ENCODE measurements at regions of chr9 and their contacts with region 1.

Region 1: DNA sequence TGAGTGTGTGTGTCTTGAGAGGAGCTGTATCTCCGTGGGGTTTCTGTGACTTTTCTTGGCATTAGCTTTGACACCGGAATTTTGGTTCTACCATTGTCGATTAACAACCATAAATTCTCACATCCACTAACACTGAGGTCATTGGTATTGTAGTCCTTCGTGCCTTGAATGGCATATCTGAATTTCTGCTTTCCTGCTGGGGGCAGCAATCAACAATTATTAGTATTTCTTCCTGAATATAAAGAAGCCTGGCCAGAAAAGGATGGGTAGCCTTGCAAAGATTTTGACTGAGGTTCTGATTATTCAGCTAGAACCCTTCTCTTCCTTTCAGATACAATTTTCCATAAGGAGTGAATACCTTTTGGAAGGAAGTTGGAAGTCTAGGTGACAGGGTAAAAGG is 33.5 kb upstream of the SHOC1 start:
- DNase-seq: peak; percentile 48
- ATAC-seq: peak; percentile 39
- H3K4me3 ChIP-seq: no peak overlapping the region
- H3K4me3 Mint-ChIP-seq: no peak overlapping the region
- H3K27ac ChIP-seq: no peak overlapping the region
- H3K27ac Mint-ChIP-seq: no peak overlapping the region
- H3K4me1 ChIP-seq: peaks cover 3 to 4% of the 10 kb centered on the region in 2 donors
- H3K4me1 Mint-ChIP-seq: peaks cover 9% of the 10 kb centered on the region
- H3K27me3 ChIP-seq: no peaks in the 10 kb centered on the region
- H3K27me3 Mint-ChIP-seq: no peaks in the 10 kb centered on the region
- CTCF ChIP-seq: peak; percentile 9

Region 2: GRCh38 chr9:111937781-111938426 is 109.7 kb after region 1 on chr9:
- CTCF ChIA-PET with region 1: no interaction called
- POLR2A ChIA-PET with region 1: no interaction called
- intact Hi-C with region 1: loop called (anchors 5 kb)
- DNase-seq: peak; percentile 69
- ATAC-seq: peak; percentile 72
- H3K4me3 ChIP-seq: peak overlapping the region in 2 of 5 experiments; percentile 10 to 22
- H3K4me3 Mint-ChIP-seq: peak overlapping the region; percentile 64
- H3K27ac ChIP-seq: peak overlapping the region; percentile 61 to 83
- H3K27ac Mint-ChIP-seq: peak overlapping the region; percentile 81
- H3K4me1 ChIP-seq: peaks cover 23 to 28% of the 10 kb centered on the region in 2 donors
- H3K4me1 Mint-ChIP-seq: peaks cover 31% of the 10 kb centered on the region
- H3K27me3 ChIP-seq: no peaks in the 10 kb centered on the region
- H3K27me3 Mint-ChIP-seq: no peaks in the 10 kb centered on the region
- CTCF ChIP-seq: no peak

Measured in B cell (primary cell).